HepG2 (cell line): ENCODE measurements at regions of chr14 and their contacts with region 1.

Region 1: GRCh38 chr14:77660754-77661153 is 44.3 kb upstream of the SPTLC2 start:
- DNase-seq: no peak
- ATAC-seq: no peak
- H3K4me3 ChIP-seq: no peak overlapping the region
- H3K27ac ChIP-seq: no peak overlapping the region
- H3K4me1 ChIP-seq: 0 out of 2 replicates have a peak, but pooled peaks cover 11% of the 10 kb centered on the region
- H3K27me3 ChIP-seq: no peaks in the 10 kb centered on the region; a peak in 1 of 5 replicates
- CTCF ChIP-seq: no peak
- EP300 ChIP-seq: no peak
- POLR2A ChIP-seq: no peak
- RAD21 ChIP-seq: no peak

Region 2: GRCh38 chr14:77707724-77708408 is 47.1 kb after region 1 on chr14 and contains the starts of genes ALKBH1 and SLIRP:
- CTCF ChIA-PET with region 1: no interaction called
- POLR2A ChIA-PET with region 1: no interaction called
- in situ Hi-C with region 1: loop called (anchors 5 kb)
- intact Hi-C with region 1: loop called (anchors 1 kb)
- DNase-seq: peak; percentile 81
- ATAC-seq: peak; percentile 97
- H3K4me3 ChIP-seq: peak within 1 kb of the TSS; percentile 92 to 97 (median 92)
- H3K27ac ChIP-seq: peak within 1 kb of the TSS; percentile 69
- H3K4me1 ChIP-seq: peaks cover 28% of the 10 kb centered on the region
- H3K27me3 ChIP-seq: no peaks in the 10 kb centered on the region; a peak in 1 of 5 replicates
- CTCF ChIP-seq: peak; percentile 14; the same call in 1 of the 2 replicates
- EP300 ChIP-seq: no peak
- POLR2A ChIP-seq: peak; percentile 91 to 93
- RAD21 ChIP-seq: no peak
- total RNA-seq, gene ALKBH1: 14.3 and 14.5 TPM in 2 replicates
- total RNA-seq, gene SLIRP: 548 and 656 TPM in 2 replicates